CD4-positive, alpha-beta memory T cell (primary cell): ENCODE measurements at regions of chr1 and their contacts with region 1.

Region 1: DNA sequence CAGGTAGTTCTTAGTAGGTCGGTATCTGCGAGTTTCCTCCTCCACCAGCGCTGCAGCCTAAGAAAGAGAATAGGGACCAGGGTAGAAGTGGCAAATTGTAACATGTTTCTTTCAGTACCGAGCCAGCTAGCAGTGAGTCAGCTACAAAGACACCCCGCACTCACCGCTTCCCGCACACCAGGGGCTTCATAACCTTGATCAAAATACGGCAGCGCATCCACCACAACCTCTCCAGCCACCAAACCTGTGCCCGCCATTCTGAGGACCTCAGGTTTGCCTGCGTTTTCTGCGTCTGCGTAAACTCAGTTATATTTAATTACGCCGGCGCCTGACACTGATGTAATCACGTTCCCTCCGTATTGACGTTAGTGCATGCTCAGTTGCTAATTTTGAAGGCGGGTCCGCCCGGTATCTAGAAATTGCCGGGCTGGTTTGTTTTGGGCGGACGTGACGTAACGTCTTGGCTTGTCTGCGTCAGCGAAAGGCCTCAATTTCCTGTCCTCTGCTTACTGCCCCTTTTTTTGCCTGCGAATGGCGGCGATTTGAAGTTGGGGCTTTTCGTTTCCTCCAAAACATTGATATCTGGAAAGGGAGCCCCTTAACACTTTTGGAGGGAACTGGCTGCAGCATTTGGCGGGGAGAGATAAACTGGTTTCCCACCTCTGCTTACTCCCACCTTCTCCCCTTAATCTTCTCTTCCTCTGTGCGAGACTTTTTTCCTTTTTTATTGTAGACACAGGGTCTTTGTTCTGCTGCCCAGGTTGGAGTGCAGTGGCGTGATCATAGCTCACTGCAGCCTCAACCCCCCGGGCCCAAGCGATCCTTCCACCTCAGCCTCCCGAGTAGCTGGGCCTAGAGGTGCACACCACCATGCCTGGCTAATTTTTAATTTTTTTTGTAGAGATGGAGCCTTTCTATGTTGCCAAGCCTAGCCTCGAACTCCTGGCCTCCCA is at the start of gene BCAS2:
- DNase-seq: peak; percentile 93 to 98 (median 97)
- H3K4me3 ChIP-seq: peak within 1 kb of the TSS; percentile 76 to 80
- H3K4me3 Mint-ChIP-seq: peak within 1 kb of the TSS; percentile 95 to 99 (median 96)
- H3K27ac ChIP-seq: peak within 1 kb of the TSS; percentile 90
- H3K27ac Mint-ChIP-seq: peak within 1 kb of the TSS; percentile 92 to 100 (median 99)
- H3K4me1 ChIP-seq: peaks cover 30% of the 10 kb centered on the region
- H3K4me1 Mint-ChIP-seq: peaks cover 14 to 42% (median 27%) of the 10 kb centered on the region in 4 donors
- H3K27me3 ChIP-seq: no peaks in the 10 kb centered on the region
- H3K27me3 Mint-ChIP-seq: peaks cover 0 to 1% of the 10 kb centered on the region in 2 donors
- total RNA-seq, gene BCAS2: 33.9 to 40.8 TPM

Region 2: GRCh38 chr1:113895098-113895497 is 686.5 kb before region 1 on chr1:
- CTCF ChIA-PET with region 1: no interaction called
- POLR2A ChIA-PET with region 1: no interaction called
- intact Hi-C with region 1: no loop called
- DNase-seq: no peak
- H3K4me3 ChIP-seq: no peak overlapping the region
- H3K4me3 Mint-ChIP-seq: no peak overlapping the region
- H3K27ac ChIP-seq: no peak overlapping the region
- H3K27ac Mint-ChIP-seq: peak overlapping the region in 2 of 7 donors; percentile 66 to 72
- H3K4me1 ChIP-seq: peaks cover 6% of the 10 kb centered on the region
- H3K4me1 Mint-ChIP-seq: peaks cover 13 to 32% (median 27%) of the 10 kb centered on the region in 4 donors
- H3K27me3 ChIP-seq: no peaks in the 10 kb centered on the region
- H3K27me3 Mint-ChIP-seq: no peaks in the 10 kb centered on the region

Region 3: GRCh38 chr1:114670083-114671010 is 88.7 kb after region 1 on chr1:
- CTCF ChIA-PET with region 1: interaction called, 5 read pairs
- POLR2A ChIA-PET with region 1: interaction called, 3 read pairs
- intact Hi-C with region 1: loop called (anchors 1 kb)
- DNase-seq: peak; percentile 76 to 87 (median 78)
- H3K4me3 ChIP-seq: peak overlapping the region; percentile 25 to 76
- H3K4me3 Mint-ChIP-seq: peak overlapping the region; percentile 94 to 98 (median 96)
- H3K27ac ChIP-seq: peak overlapping the region; percentile 49
- H3K27ac Mint-ChIP-seq: peak overlapping the region; percentile 81 to 95 (median 91)
- H3K4me1 ChIP-seq: peaks cover 7% of the 10 kb centered on the region
- H3K4me1 Mint-ChIP-seq: peaks cover 6 to 14% (median 10%) of the 10 kb centered on the region in 4 donors
- H3K27me3 ChIP-seq: no peaks in the 10 kb centered on the region
- H3K27me3 Mint-ChIP-seq: peaks cover 5 to 7% of the 10 kb centered on the region in 2 donors

Region 4: GRCh38 chr1:114757455-114758250 is 176.0 kb after region 1 on chr1 and contains the start of gene CSDE1:
- CTCF ChIA-PET with region 1: interaction called, 4 read pairs
- POLR2A ChIA-PET with region 1: interaction called, 5 read pairs
- intact Hi-C with region 1: loop called (anchors 1 kb)
- DNase-seq: peak; percentile 96 to 98 (median 97)
- H3K4me3 ChIP-seq: peak within 1 kb of the TSS; percentile 97 to 99
- H3K4me3 Mint-ChIP-seq: peak within 1 kb of the TSS; percentile 97 to 100 (median 100)
- H3K27ac ChIP-seq: peak within 1 kb of the TSS; percentile 100
- H3K27ac Mint-ChIP-seq: peak within 1 kb of the TSS; percentile 100
- H3K4me1 ChIP-seq: peaks cover 52% of the 10 kb centered on the region
- H3K4me1 Mint-ChIP-seq: peaks cover 43 to 62% (median 49%) of the 10 kb centered on the region in 4 donors
- H3K27me3 ChIP-seq: no peaks in the 10 kb centered on the region
- H3K27me3 Mint-ChIP-seq: no peaks in the 10 kb centered on the region
- total RNA-seq, gene CSDE1: 530 to 559 TPM

Region 5: DNA sequence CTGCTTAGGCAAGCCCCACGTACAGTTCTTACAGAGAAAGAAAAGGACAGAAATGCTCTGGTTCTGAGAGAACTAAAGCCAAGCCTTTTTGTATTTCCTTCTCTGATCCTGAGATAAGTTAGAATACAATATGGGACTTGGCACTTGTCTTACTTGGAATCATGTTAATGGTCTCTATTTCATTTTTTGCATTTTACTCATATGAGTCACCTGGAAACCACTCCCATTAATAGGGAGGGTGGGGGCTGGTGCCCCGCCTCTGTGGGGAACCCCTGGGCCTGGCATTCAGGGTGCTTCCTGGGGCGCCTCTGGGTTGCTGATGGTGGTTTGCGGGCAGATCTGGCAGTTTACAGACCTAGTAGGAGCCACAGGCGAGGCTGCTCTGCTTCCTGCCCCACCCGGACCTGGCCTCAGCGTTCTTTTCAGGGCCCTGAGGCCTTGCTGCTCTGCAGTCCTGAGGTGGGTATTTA is 481.0 kb after region 1 on chr1:
- CTCF ChIA-PET with region 1: no interaction called
- POLR2A ChIA-PET with region 1: no interaction called
- intact Hi-C with region 1: loop called (anchors 1 kb)
- DNase-seq: peak; percentile 95 to 99 (median 97)
- H3K4me3 ChIP-seq: peak overlapping the region in 1 of 2 donors; percentile 33
- H3K4me3 Mint-ChIP-seq: peak overlapping the region; percentile 77 to 91 (median 84)
- H3K27ac ChIP-seq: peak overlapping the region; percentile 79
- H3K27ac Mint-ChIP-seq: peak overlapping the region; percentile 98 to 100 (median 100)
- H3K4me1 ChIP-seq: peaks cover 44% of the 10 kb centered on the region
- H3K4me1 Mint-ChIP-seq: peaks cover 43 to 57% (median 49%) of the 10 kb centered on the region in 4 donors
- H3K27me3 ChIP-seq: no peaks in the 10 kb centered on the region
- H3K27me3 Mint-ChIP-seq: no peaks in the 10 kb centered on the region